Tibial artery (tissue), 4 donors: ENCODE measurements at regions of chr2 and their contacts with region 1.

Region 1: GRCh38 chr2:224395620-224396390 is 6.1 kb downstream of the FAM124B start:
- DNase-seq: no peak
- H3K4me3 ChIP-seq: no peak overlapping the region
- H3K27ac ChIP-seq: no peak overlapping the region
- H3K4me1 ChIP-seq: no peaks in the 10 kb centered on the region
- H3K27me3 ChIP-seq: no peaks in the 10 kb centered on the region
- CTCF ChIP-seq: no peak

Region 2: DNA sequence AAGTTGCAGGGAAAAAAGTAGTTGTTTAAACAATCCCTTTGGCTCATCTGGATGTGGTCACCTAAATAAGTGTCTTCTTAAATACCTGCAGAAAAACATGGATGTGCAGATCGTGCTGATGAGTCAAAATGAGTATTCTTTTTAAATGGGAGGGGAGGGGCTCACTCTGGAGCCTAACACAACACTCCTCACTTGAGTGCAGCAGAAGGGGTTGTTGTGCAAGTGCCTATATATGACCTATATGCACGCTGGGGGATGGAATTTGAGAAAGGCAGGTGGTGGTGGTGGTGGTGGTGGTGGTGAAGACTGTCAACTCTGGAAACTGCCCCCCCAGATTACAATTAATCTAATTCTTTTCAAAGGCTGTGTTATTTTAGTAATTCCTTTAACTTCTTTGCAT is 84.0 kb after region 1 on chr2:
- intact Hi-C with region 1: loop called (anchors 10 kb)
- DNase-seq: no peak
- H3K4me3 ChIP-seq: no peak overlapping the region
- H3K27ac ChIP-seq: no peak overlapping the region
- H3K4me1 ChIP-seq: peaks cover 0 to 5% (median 3%) of the 10 kb centered on the region in 4 donors
- H3K27me3 ChIP-seq: no peaks in the 10 kb centered on the region
- CTCF ChIP-seq: no peak